ENCODE measurements at regions of chr20 and their contacts with region 1.

Region 1: DNA sequence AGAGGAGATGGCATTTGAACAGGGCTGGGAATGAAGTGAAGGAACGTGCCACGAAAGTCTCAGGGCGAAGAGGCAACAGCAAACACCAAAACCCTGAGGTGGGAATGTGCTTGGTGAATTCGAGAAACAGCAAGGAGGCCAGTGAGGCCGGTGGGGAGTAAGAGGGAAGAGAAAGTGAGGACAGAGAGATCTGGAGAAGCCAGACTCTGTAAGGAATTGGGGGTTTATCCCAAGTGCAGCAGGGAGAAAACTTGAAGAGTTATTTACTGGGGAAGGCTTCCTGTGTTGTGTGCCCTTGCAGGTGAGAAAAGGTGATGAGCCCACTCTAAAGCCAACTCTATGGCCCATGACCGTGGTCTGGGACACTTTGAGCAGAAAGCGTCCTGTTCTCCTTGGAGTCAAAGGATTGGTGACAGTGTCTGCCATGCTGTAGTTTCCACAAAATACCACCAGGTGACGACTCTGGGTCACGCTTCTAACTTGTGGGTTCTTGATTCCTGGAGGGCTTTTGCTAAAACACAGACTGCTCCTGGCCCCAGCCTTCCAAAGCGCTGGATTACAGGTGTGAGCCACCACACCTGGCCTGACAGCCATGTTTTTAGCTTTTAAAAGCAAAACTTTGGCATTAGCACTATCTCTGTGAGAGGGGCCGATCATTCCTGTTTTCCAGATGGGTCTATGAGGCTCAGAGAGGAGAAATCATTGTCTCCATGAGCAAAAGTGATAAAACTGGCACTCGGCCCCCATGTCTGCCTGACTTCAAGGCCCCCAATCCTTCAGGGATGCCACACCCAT is 18.0 kb upstream of the CSNK2A1 start:
- DNase-seq: peak; percentile 42 to 72 (median 68)
- ATAC-seq: peak; percentile 77 to 85
- H3K4me3 ChIP-seq: no peak overlapping the region
- H3K27ac ChIP-seq: no peak overlapping the region
- H3K4me1 ChIP-seq: no peaks in the 10 kb centered on the region
- H3K27me3 ChIP-seq: no peaks in the 10 kb centered on the region

Region 2: GRCh38 chr20:634556-634955 is 72.9 kb after region 1 on chr20:
- intact Hi-C with region 1: no loop called
- DNase-seq: no peak
- ATAC-seq: no peak
- H3K4me3 ChIP-seq: no peak overlapping the region
- H3K27ac ChIP-seq: no peak overlapping the region
- H3K4me1 ChIP-seq: no peaks in the 10 kb centered on the region
- H3K27me3 ChIP-seq: no peaks in the 10 kb centered on the region

Region 3: GRCh38 chr20:645318-646106 is 83.9 kb after region 1 on chr20:
- intact Hi-C with region 1: loop called (anchors 2 to 5 kb)
- DNase-seq: peak; percentile 64 to 91 (median 88)
- ATAC-seq: peak; percentile 66 to 80
- H3K4me3 ChIP-seq: no peak overlapping the region
- H3K27ac ChIP-seq: peak overlapping the region; percentile 50
- H3K4me1 ChIP-seq: no peaks in the 10 kb centered on the region
- H3K27me3 ChIP-seq: no peaks in the 10 kb centered on the region

Region 4: GRCh38 chr20:728248-728944 is 166.8 kb after region 1 on chr20:
- intact Hi-C with region 1: loop called in 2 of 4 experiments (anchors 5 to 10 kb)
- DNase-seq: peak; percentile 45 to 87 (median 76)
- ATAC-seq: peak; percentile 71 to 76
- H3K4me3 ChIP-seq: peak overlapping the region; percentile 65
- H3K27ac ChIP-seq: no peak overlapping the region
- H3K4me1 ChIP-seq: no peaks in the 10 kb centered on the region
- H3K27me3 ChIP-seq: no peaks in the 10 kb centered on the region

Region 5: DNA sequence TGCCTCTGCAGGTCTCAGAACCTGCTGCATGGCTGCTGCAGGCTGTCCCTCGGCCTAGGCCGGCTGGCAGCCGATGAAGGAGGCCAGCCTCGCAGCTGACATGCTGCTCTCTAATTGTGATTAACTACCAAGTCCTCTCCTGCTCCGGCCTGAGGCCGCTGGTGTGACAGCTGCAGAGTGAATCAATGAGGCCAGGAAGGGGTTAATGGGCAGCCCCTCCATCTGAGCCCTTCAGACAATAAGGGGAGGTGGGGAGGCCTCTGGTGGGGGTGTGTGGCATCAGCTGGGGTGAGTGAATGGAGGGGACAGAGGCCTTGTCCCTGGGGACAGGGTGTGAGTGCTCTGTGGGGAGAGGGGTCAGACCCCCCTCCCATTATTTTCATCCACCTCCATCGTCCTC is 172.2 kb after region 1 on chr20:
- intact Hi-C with region 1: loop called (anchors 2 to 10 kb)
- DNase-seq: no peak
- ATAC-seq: no peak
- H3K4me3 ChIP-seq: no peak overlapping the region
- H3K27ac ChIP-seq: no peak overlapping the region
- H3K4me1 ChIP-seq: no peaks in the 10 kb centered on the region
- H3K27me3 ChIP-seq: no peaks in the 10 kb centered on the region

Region 6: DNA sequence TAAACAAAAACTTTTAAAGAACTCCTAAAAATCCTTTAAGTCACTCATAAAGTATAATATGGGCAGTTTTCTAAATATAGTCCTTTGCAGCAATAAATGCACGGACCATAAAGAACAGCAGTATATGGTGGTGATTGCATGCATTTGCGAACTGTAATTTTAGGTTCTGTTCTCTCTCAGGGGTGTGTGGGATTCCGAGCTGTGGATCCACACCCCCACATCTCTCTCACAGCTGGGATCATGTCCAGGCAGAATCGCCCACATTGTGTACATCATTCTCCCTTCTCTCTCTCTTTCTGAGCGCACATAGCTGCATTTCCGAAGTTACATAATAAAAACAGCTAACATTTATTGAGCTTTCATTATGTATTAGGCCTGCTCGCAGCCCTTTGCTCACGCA is 178.1 kb after region 1 on chr20:
- intact Hi-C with region 1: loop called in 3 of 4 experiments (anchors 2 to 5 kb)
- DNase-seq: no peak
- ATAC-seq: no peak
- H3K4me3 ChIP-seq: no peak overlapping the region
- H3K27ac ChIP-seq: no peak overlapping the region
- H3K4me1 ChIP-seq: no peaks in the 10 kb centered on the region
- H3K27me3 ChIP-seq: no peaks in the 10 kb centered on the region

Measured in right cardiac atrium (tissue), 5 donors.